ENCODE measurements at regions of chr12 and their contacts with region 1.

Region 1: GRCh38 chr12:1583421-1584078 is 10.8 kb downstream of the FBXL14 start:
- DNase-seq: peak in 4 of 5 donors; percentile 74 to 92 (median 84)
- H3K4me3 ChIP-seq: peak overlapping the region; percentile 42 to 56 (median 55)
- H3K27ac ChIP-seq: no peak overlapping the region
- H3K4me1 ChIP-seq: peaks cover 0 to 11% (median 10%) of the 10 kb centered on the region in 3 donors
- H3K27me3 ChIP-seq: no peaks in the 10 kb centered on the region
- CTCF ChIP-seq: peak; percentile 94

Region 2: GRCh38 chr12:1117970-1118563 is 465.5 kb before region 1 on chr12:
- intact Hi-C with region 1: loop called (anchors 5 kb)
- DNase-seq: peak in 4 of 5 donors; percentile 73 to 88 (median 81)
- H3K4me3 ChIP-seq: no peak overlapping the region
- H3K27ac ChIP-seq: no peak overlapping the region
- H3K4me1 ChIP-seq: no peaks in the 10 kb centered on the region
- H3K27me3 ChIP-seq: no peaks in the 10 kb centered on the region
- CTCF ChIP-seq: peak; percentile 93